ENCODE measurements at regions of chr9 and their contacts with region 1.

Region 1: DNA sequence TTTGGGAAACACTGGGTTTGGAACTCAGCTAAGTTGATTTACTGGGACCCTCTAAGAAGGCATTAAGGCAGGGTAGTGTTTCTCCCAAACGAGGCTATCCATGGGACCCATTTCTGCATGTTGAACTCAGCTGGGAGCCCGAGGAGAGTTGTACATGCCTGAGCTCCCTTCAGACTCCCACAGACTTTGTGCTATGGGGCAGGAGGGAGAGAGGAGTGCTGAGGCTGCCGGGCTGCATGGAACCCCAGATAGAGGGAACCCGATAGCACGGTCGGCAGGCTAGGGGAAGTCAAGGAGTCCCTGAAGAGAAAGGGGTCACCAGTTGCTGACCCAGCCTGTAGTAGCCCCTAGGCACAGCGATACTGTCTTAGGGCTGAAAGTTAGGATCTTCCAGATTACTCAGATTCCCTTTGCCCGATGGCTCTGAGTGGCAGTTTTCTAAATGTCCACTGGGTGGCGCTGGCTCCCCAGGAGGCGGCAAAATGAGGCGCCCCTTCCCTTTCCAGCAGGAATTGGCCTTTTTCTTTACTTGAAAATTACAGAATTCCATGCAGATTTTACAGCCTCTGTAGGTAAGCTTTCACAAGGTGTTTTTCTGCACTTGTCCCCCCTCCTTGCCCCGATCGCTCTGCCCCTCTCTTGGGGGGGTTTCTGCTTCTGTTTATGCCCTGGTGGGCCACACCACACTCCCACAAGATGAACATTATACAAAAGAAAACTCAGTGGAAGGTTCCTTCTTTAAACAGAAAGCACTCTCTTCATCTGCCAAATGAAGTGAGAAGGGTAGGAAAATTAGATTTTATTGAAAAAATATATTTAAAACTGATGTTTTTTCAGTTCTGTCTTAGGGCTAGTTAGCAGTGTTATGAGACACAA is 17.8 kb downstream of the NANS start:
- DNase-seq: peak; percentile 81
- ATAC-seq: no peak
- H3K4me3 Mint-ChIP-seq: no peak overlapping the region
- H3K27ac Mint-ChIP-seq: peak overlapping the region; percentile 90
- H3K4me1 Mint-ChIP-seq: peaks cover 34% of the 10 kb centered on the region
- H3K27me3 Mint-ChIP-seq: no peaks in the 10 kb centered on the region

Region 2: DNA sequence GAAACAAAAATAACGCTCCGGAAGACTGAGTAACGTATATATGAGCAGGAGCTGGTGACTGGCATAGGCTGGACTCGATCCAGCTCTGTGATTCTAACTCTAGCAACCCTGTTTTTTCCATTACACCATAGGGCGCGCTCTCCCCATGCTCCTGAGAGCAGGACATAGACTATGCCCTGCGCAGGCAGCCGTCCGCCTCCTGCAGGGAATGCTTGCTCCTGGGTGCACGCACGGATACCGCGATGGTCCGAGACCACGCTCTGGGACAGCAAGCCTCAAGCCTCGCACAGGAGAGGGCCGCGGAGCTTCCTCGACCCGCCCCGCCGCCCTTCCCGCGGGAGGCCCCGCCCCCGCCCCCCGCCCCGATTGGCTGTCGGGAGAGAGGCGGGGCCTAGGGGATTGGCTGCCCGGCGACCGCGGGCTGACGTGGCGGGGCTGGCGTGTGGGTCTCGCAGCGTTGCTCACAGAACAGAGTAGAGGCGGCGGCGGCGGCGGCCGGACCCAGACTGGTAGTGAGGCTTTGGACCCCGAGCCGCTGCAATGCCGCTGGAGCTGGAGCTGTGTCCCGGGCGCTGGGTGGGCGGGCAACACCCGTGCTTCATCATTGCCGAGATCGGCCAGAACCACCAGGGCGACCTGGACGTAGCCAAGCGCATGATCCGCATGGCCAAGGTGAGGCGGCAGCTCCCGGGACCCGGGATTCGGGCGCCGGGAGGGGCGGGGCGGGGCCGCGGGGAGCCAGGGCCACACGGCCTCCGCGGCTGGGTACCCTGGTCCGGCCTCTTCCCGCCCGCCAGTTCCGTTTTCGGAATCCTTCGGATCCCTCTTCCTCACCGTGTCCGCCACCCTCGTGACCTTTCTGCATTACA is 17.9 kb before region 1 on chr9 and contains the start of gene NANS:
- CTCF ChIA-PET with region 1: interaction called, 4 read pairs
- POLR2A ChIA-PET with region 1: interaction called, 12 read pairs
- intact Hi-C with region 1: loop called (anchors 1 to 2 kb)
- DNase-seq: peak; percentile 97
- ATAC-seq: peak; percentile 94
- H3K4me3 Mint-ChIP-seq: peak within 1 kb of the TSS; percentile 94
- H3K27ac Mint-ChIP-seq: peak within 1 kb of the TSS; percentile 98
- H3K4me1 Mint-ChIP-seq: peaks cover 28% of the 10 kb centered on the region
- H3K27me3 Mint-ChIP-seq: no peaks in the 10 kb centered on the region
- total RNA-seq, gene NANS: 45.9 to 47.7 TPM

Region 3: GRCh38 chr9:98118640-98119601 is 44.6 kb after region 1 on chr9 and contains the start of gene TRIM14:
- CTCF ChIA-PET with region 1: interaction called, 4 read pairs
- POLR2A ChIA-PET with region 1: no interaction called
- intact Hi-C with region 1: loop called (anchors 1 to 2 kb)
- DNase-seq: peak; percentile 79
- ATAC-seq: peak; percentile 49
- H3K4me3 Mint-ChIP-seq: peak within 1 kb of the TSS; percentile 75
- H3K27ac Mint-ChIP-seq: peak within 1 kb of the TSS; percentile 91
- H3K4me1 Mint-ChIP-seq: peaks cover 47% of the 10 kb centered on the region
- H3K27me3 Mint-ChIP-seq: no peaks in the 10 kb centered on the region
- total RNA-seq, gene TRIM14: 54.6 to 59.6 TPM

Region 4: GRCh38 chr9:98207606-98208005 is 133.3 kb after region 1 on chr9:
- CTCF ChIA-PET with region 1: no interaction called
- POLR2A ChIA-PET with region 1: no interaction called
- intact Hi-C with region 1: loop called (anchors 1 to 2 kb)
- DNase-seq: no peak
- ATAC-seq: no peak
- H3K4me3 Mint-ChIP-seq: no peak overlapping the region
- H3K27ac Mint-ChIP-seq: no peak overlapping the region
- H3K4me1 Mint-ChIP-seq: peaks cover 2% of the 10 kb centered on the region
- H3K27me3 Mint-ChIP-seq: no peaks in the 10 kb centered on the region

Region 5: DNA sequence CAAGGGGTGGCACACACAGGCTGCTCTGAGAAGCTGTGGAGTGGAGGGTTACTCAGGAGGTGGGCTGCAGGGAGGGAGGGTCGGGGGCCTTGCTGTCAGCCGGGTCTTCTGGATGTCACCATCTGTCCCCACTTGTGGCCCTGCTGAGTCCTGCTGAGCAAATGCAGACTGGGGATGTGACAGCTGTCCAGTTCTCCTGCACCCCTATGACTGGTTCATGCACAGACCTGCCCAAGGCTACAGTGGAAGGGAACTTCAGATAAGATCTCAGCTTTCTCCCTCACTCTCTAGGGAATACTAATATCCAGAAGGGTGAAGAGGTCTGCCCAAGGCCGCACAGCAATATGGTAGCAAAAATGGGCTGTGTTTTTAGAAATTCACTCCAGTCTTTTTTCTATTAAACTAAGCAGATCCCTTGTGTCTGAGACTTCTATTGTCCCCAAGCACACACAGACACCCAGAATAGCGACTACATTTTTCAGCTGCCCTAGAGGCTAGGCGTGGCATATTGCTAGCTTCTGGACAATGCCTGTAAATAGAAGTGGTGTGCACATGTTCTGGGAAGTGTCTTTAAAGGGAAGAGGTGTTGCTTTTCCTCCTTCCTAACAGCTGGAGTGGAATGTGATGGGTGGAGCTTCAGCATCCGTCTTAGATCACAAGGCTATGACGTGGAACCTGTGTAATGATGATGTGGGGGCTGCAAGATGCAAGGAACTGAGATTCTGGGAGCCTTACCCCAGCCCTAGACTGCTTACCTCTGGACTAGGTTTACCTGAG is 232.2 kb after region 1 on chr9:
- CTCF ChIA-PET with region 1: no interaction called
- POLR2A ChIA-PET with region 1: no interaction called
- intact Hi-C with region 1: no loop called
- DNase-seq: no peak
- ATAC-seq: no peak
- H3K4me3 Mint-ChIP-seq: no peak overlapping the region
- H3K27ac Mint-ChIP-seq: no peak overlapping the region
- H3K4me1 Mint-ChIP-seq: no peaks in the 10 kb centered on the region
- H3K27me3 Mint-ChIP-seq: no peaks in the 10 kb centered on the region

Region 6: DNA sequence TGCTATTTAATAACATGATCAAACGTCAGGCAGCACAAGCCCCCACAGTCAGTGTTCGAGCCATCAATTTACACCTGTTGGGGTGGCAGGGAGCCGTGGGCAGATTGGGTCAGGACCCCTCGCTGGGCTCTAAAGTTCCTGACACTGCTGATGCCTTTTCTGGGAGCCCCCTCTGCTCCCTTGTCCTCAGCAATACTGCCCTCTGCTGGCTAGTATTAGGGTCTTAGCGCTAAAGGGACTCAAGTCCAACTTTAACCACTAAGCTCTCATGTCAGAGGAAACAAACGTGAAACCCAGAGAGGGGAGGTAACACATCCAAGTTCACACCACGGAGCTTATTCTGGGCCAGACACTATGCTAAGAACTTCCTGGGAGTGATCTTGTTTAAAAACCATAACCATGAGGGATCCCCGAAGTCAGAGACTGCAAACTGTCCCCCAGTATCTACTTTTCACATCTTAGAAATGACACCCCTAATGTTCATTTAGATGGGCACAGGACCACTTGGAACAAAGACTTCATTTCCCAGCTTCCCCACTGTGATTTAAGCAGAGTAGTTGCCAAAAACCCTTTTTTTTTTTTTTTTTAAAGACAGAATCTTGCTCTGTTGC is 701.6 kb after region 1 on chr9:
- CTCF ChIA-PET with region 1: interaction called, 4 read pairs
- POLR2A ChIA-PET with region 1: no interaction called
- intact Hi-C with region 1: loop called in 1 of 2 experiments (anchors 10 kb)
- DNase-seq: peak; percentile 47
- ATAC-seq: no peak
- H3K4me3 Mint-ChIP-seq: no peak overlapping the region
- H3K27ac Mint-ChIP-seq: no peak overlapping the region
- H3K4me1 Mint-ChIP-seq: no peaks in the 10 kb centered on the region
- H3K27me3 Mint-ChIP-seq: no peaks in the 10 kb centered on the region